Activated naive CD4-positive, alpha-beta T cell treated with anti-CD3 and anti-CD28 coated beads for 36 hours (primary cell): ENCODE measurements at regions of chr18 and their contacts with region 1.

Region 1: DNA sequence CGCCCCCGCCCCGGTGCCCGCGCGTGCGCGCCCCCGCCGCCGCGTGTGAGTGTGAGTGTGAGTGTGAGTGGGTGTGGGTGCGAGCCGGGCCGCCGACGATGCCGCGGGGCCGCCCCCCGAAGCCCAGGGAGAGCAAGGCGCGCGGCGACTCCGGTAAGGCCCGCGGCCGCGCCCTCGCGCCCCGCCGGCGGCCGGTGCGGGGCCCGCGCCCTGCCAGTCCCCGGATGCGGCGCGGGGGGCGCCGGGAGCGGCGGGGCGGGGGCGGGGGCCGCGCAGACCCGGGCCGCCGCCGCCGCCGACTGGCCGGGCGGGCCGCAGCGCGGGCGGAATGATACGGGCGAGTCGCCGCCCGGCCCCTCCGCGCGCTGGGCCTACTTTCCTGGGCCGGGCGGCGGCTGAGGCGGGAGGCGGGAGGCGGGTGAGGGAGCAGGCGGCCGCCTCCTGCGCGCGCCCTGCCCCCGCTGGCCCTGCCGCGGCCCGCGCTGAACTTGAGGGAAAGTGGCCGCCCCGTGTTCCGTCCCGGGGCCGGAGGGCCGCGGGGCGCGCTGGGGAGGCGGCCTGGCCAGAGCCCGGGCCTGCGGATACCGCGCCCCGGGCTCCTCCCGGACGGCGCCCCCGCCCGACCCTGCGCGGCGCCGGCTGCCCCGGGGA is at the start of gene ZNF236:
- DNase-seq: peak; percentile 57
- H3K4me3 Mint-ChIP-seq: peak within 1 kb of the TSS; percentile 90
- H3K27ac Mint-ChIP-seq: peak within 1 kb of the TSS; percentile 92
- H3K4me1 Mint-ChIP-seq: peaks cover 51% of the 10 kb centered on the region
- H3K27me3 Mint-ChIP-seq: no peaks in the 10 kb centered on the region
- total RNA-seq, gene ZNF236: 13.7 to 17.7 TPM

Region 2: DNA sequence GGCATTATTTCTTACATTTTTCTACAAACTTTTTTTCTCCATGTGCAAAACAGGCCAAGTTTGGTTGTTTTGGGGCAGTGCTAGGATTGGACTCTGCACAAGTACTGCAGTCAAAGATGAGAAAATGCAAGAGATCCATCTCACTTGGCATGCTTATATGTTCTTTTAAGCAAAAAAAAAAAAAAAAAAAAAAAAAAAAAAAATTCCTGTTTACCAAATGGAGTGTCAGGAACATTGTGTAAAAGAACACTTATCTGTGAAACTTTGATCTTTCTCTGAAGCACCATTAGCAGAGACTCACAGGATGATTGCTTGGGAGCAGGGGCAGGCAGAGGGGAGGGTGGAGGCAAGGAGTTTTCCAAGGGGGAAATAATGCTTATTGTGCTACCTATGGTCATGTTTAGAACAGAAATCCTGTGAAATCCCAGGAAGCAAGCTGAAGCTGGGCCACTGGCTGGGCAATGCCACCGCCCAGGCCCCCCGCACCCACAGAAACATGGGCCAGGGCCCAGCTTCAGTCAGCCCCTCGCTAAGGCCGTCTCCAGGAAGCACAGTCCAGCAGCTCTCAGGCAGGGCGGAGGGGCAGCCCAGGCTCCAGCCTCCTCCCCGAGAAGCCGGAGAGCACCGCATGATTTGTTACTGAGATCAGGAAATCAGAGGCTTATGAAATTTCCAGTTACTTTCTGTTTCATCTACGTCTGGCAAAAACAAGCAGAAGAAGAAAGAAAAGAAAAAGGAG is 557.0 kb before region 1 on chr18:
- CTCF ChIA-PET with region 1: no interaction called
- intact Hi-C with region 1: no loop called
- DNase-seq: no peak
- H3K4me3 Mint-ChIP-seq: no peak overlapping the region
- H3K27ac Mint-ChIP-seq: no peak overlapping the region
- H3K4me1 Mint-ChIP-seq: peaks cover 2% of the 10 kb centered on the region
- H3K27me3 Mint-ChIP-seq: peaks cover 6% of the 10 kb centered on the region

Region 3: DNA sequence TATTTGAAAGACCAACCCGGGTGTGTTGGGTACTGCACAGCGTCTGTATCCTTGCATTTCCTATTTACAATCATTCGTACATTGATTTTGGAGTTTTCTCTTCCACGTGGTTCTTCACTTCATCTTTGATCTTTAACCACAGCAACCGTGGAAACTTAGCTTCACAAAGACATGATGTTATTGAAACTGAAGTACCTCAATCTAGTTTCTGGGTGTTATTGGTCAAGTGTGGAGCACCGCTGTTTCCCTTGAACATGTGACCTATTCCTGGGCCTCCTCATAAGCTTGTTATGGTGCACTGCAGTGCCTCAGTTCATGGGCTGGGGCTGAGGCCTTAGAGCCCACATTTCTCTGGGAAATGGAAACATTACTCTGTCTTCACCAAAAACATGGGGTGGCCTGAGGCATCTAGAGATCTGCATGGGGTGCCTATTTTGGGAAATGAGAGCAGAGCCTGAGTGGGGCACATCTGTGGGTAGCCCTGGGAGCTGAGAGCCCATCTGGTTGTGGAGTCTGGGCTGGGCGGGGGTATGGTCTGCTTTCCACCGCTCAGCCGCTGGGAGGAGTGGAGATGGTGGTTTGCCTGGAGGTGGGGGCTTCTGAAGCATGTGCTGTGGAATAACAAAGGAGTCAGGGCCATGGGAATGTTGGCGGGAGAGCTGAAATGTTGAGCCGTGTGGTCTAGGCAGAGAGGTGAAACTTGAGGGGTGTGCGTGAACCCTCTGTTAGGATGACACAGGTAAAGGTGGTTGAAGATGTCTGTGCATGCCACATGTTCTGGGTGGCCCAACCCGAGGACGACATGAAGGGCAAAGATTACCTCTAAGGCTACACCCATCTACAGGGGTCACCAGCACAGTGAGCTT is 37.1 kb after region 1 on chr18:
- CTCF ChIA-PET with region 1: interaction called, 4 read pairs
- intact Hi-C with region 1: loop called (anchors 1 kb)
- DNase-seq: peak; percentile 66
- H3K4me3 Mint-ChIP-seq: no peak overlapping the region
- H3K27ac Mint-ChIP-seq: peak overlapping the region; percentile 54
- H3K4me1 Mint-ChIP-seq: peaks cover 22% of the 10 kb centered on the region
- H3K27me3 Mint-ChIP-seq: no peaks in the 10 kb centered on the region

Region 4: GRCh38 chr18:76982841-76983587 is 160.4 kb after region 1 on chr18:
- CTCF ChIA-PET with region 1: interaction called, 4 read pairs
- intact Hi-C with region 1: loop called (anchors 5 kb)
- DNase-seq: peak; percentile 96
- H3K4me3 Mint-ChIP-seq: no peak overlapping the region
- H3K27ac Mint-ChIP-seq: no peak overlapping the region
- H3K4me1 Mint-ChIP-seq: peaks cover 5% of the 10 kb centered on the region
- H3K27me3 Mint-ChIP-seq: no peaks in the 10 kb centered on the region

Region 5: GRCh38 chr18:77054606-77055428 is 232.2 kb after region 1 on chr18:
- CTCF ChIA-PET with region 1: no interaction called
- intact Hi-C with region 1: loop called (anchors 2 kb)
- DNase-seq: peak; percentile 93
- H3K4me3 Mint-ChIP-seq: peak overlapping the region; percentile 78
- H3K27ac Mint-ChIP-seq: peak overlapping the region; percentile 93
- H3K4me1 Mint-ChIP-seq: peaks cover 49% of the 10 kb centered on the region
- H3K27me3 Mint-ChIP-seq: no peaks in the 10 kb centered on the region

Region 6: DNA sequence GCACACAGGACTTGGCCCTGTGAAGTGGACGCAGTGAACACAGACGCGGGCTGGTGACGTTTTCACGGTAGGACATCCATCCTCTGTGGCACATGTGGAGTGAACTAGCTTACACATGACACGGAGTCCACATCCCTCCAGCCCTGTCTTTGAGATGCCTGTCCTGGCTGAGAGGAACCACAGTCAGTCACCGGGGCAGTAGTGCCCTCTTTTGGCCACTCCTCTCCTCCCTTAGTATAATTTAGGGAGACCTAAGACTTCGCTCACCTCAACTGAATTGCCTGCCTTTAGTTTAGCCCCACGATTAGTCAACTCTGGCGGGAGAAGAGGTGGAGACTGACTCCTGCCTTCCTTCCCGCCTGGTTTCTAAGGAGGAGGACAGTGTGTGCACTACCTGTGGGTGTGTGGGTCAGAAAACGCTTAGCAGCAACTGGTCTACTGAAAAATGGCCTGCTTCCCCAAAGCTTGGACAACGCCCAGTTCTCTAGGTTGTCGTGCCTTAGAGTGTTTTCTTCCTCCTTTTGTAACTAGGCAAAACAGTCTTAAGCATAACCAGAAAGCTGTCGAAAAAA is 239.4 kb after region 1 on chr18:
- CTCF ChIA-PET with region 1: no interaction called
- intact Hi-C with region 1: loop called (anchors 2 kb)
- DNase-seq: peak; percentile 55
- H3K4me3 Mint-ChIP-seq: peak overlapping the region; percentile 11
- H3K27ac Mint-ChIP-seq: peak overlapping the region; percentile 98
- H3K4me1 Mint-ChIP-seq: peaks cover 78% of the 10 kb centered on the region
- H3K27me3 Mint-ChIP-seq: no peaks in the 10 kb centered on the region

Region 7: GRCh38 chr18:77132371-77133050 is 309.9 kb after region 1 on chr18 and contains the start of gene MBP:
- CTCF ChIA-PET with region 1: no interaction called
- intact Hi-C with region 1: loop called (anchors 5 kb)
- DNase-seq: peak; percentile 78
- H3K4me3 Mint-ChIP-seq: peak within 1 kb of the TSS; percentile 90
- H3K27ac Mint-ChIP-seq: peak within 1 kb of the TSS; percentile 93
- H3K4me1 Mint-ChIP-seq: peaks cover 53% of the 10 kb centered on the region
- H3K27me3 Mint-ChIP-seq: no peaks in the 10 kb centered on the region
- total RNA-seq, gene MBP: 35.9 to 36.6 TPM

Region 8: GRCh38 chr18:78587096-78587495 is 1764.5 kb after region 1 on chr18:
- CTCF ChIA-PET with region 1: no interaction called
- intact Hi-C with region 1: no loop called
- DNase-seq: no peak
- H3K4me3 Mint-ChIP-seq: no peak overlapping the region
- H3K27ac Mint-ChIP-seq: no peak overlapping the region
- H3K4me1 Mint-ChIP-seq: no peaks in the 10 kb centered on the region
- H3K27me3 Mint-ChIP-seq: no peaks in the 10 kb centered on the region